ENCODE measurements at regions of chr9 and their contacts with region 1.

Region 1: DNA sequence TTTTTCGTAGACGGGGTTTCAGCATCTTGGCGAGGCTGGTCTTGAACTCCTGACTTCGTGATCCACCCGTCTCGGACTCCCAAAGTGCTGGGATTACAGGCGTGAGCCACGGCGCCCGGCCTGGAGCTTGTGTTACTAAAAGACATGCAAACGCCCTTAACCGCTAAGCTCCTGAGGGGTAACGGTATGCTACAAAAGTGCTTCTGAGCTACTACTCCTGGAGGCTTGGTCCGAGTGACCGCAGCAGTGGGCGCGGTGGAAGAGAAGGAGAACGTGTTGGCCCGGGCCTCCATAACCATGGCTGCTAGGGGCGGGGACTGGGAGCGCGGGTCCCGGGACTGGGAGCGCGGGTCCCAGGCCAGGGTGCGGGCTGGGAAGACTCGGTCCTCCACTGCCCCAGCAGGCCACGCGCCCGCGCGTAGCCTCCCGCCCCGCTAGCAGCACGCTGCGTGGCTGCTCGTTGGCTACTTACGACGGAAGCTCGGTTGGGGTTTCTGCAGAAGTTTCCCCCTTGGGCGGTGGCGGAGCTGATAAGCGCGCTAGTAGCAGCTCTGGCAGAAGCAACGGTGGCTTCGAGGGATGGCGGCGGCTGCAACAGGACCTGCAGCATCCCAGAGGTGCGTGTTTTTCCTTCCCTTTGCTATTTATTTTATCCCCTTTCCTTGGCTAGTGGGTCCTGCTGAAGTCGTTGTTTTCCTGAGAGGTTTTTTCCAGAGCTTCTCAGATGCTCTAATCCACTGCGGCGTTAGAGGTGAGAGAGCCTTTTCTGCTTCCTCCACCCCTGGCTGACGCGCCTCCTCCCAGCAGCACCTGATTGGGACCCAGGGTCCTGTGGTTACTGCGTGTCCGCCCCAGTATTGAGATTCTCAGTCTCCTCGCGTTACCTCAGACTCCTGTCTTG is 69.3 kb upstream of the CCDC180 start:
- DNase-seq: peak; percentile 86 to 90
- H3K4me3 ChIP-seq: peak overlapping the region; percentile 56
- H3K4me3 Mint-ChIP-seq: peak overlapping the region; percentile 96
- H3K27ac Mint-ChIP-seq: peak overlapping the region; percentile 93
- H3K4me1 ChIP-seq: peaks cover 35% of the 10 kb centered on the region
- H3K4me1 Mint-ChIP-seq: peaks cover 23% of the 10 kb centered on the region
- H3K27me3 ChIP-seq: no peaks in the 10 kb centered on the region
- H3K27me3 Mint-ChIP-seq: no peaks in the 10 kb centered on the region
- CTCF ChIP-seq: no peak

Region 2: DNA sequence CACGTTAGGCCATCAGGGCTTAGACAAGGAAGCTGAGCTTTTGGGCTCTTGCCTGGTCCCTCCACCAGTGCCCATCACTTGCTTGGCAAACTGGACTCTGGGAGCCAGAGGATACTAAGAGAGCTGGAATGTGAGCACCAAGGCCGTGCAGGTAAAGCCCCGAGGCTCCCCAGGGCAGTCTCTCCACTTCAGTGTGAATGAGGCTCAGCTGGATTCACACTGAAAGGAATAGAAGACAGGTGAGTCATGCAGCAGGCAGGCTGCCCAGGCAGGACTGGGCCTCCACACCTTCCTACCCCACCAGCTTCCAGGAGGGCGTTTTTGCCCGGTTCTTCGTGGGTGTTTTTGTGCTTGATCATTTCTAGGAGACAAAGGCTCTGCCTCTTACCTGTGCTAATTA is 192.0 kb before region 1 on chr9:
- CTCF ChIA-PET with region 1: no interaction called
- POLR2A ChIA-PET with region 1: no interaction called
- intact Hi-C with region 1: loop called (anchors 10 kb)
- DNase-seq: peak; percentile 79 to 89
- H3K4me3 ChIP-seq: no peak overlapping the region
- H3K4me3 Mint-ChIP-seq: no peak overlapping the region
- H3K27ac Mint-ChIP-seq: peak overlapping the region; percentile 83
- H3K4me1 ChIP-seq: peaks cover 39% of the 10 kb centered on the region
- H3K4me1 Mint-ChIP-seq: peaks cover 36% of the 10 kb centered on the region
- H3K27me3 ChIP-seq: no peaks in the 10 kb centered on the region
- H3K27me3 Mint-ChIP-seq: no peaks in the 10 kb centered on the region
- CTCF ChIP-seq: no peak

Region 3: DNA sequence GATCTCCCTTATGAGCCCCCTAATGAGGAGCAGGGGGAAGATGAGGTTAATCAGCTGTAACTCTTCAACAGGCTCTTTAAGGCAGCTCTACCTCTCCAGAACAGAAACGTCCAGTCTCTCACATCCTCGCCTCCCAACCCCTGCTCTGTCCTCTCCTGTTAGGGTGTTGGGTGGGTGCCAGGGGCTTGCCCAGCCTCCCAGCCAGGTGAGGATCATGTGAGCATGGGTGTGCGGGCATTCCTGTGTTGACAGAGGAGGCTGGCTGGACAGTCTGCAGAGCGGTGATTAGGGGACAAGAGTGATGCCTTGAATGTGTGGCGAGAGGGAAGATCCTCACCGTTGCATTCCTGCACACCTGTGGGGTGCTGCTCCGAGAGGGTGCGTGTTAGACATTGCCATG is 120.9 kb after region 1 on chr9:
- CTCF ChIA-PET with region 1: no interaction called
- POLR2A ChIA-PET with region 1: no interaction called
- intact Hi-C with region 1: loop called (anchors 10 kb)
- DNase-seq: no peak
- H3K4me3 ChIP-seq: no peak overlapping the region
- H3K4me3 Mint-ChIP-seq: no peak overlapping the region
- H3K27ac Mint-ChIP-seq: peak overlapping the region; percentile 35
- H3K4me1 ChIP-seq: peaks cover 28% of the 10 kb centered on the region
- H3K4me1 Mint-ChIP-seq: peaks cover 38% of the 10 kb centered on the region
- H3K27me3 ChIP-seq: no peaks in the 10 kb centered on the region
- H3K27me3 Mint-ChIP-seq: no peaks in the 10 kb centered on the region
- CTCF ChIP-seq: no peak

Region 4: GRCh38 chr9:97386733-97387503 is 148.7 kb after region 1 on chr9:
- CTCF ChIA-PET with region 1: no interaction called
- POLR2A ChIA-PET with region 1: no interaction called
- intact Hi-C with region 1: loop called (anchors 10 kb)
- DNase-seq: peak; percentile 79 to 81
- H3K4me3 ChIP-seq: no peak overlapping the region
- H3K4me3 Mint-ChIP-seq: no peak overlapping the region
- H3K27ac Mint-ChIP-seq: peak overlapping the region; percentile 89
- H3K4me1 ChIP-seq: peaks cover 70% of the 10 kb centered on the region
- H3K4me1 Mint-ChIP-seq: peaks cover 55% of the 10 kb centered on the region
- H3K27me3 ChIP-seq: no peaks in the 10 kb centered on the region
- H3K27me3 Mint-ChIP-seq: no peaks in the 10 kb centered on the region
- CTCF ChIP-seq: peak; percentile 91 to 97

Region 5: GRCh38 chr9:97398999-97399758 is 161.0 kb after region 1 on chr9:
- CTCF ChIA-PET with region 1: no interaction called
- POLR2A ChIA-PET with region 1: no interaction called
- intact Hi-C with region 1: no loop called
- DNase-seq: peak in 1 of 2 experiments; percentile 22
- H3K4me3 ChIP-seq: no peak overlapping the region
- H3K4me3 Mint-ChIP-seq: no peak overlapping the region
- H3K27ac Mint-ChIP-seq: peak overlapping the region; percentile 5
- H3K4me1 ChIP-seq: peaks cover 2% of the 10 kb centered on the region
- H3K4me1 Mint-ChIP-seq: no peaks in the 10 kb centered on the region
- H3K27me3 ChIP-seq: no peaks in the 10 kb centered on the region
- H3K27me3 Mint-ChIP-seq: no peaks in the 10 kb centered on the region
- CTCF ChIP-seq: peak; percentile 66 to 78

Measured in Caco-2 (cell line).